WTC11 (cell line): ENCODE measurements at regions of chr6 and their contacts with region 1.

Region 1: DNA sequence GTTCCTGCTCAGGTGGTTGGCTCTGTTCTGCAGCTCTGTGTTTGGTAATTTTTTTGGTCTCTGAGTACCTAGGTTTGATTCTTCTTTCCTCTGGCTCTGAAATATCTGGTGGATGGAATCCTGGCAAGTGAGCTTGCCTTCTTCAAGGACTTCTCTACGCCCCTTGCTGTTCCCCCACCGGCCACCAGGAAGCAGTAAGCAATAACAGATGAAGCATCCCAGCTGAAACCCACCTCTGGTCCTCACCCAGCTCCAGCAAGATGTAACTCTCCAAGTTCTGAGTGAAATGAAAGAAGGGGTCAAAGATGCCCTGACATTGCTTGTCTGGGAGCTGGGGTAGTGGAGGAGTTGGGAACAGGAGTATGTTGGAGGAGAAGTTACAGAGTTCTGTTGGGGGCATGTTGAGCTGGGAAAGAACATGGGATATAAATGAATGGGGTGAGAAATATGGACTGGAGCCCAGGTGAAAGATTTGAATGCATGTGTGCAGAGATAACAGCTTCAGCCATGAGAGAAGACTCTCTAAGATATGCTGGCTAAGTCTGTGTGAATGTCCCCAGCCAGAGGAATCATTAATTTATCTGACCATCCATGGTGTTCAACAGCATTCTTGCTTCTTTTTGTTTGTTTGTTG is 51.3 kb upstream of the GLP1R start:
- DNase-seq: peak; percentile 80
- ATAC-seq: peak; percentile 92
- H3K4me3 Mint-ChIP-seq: no peak overlapping the region
- H3K27ac Mint-ChIP-seq: no peak overlapping the region
- H3K4me1 Mint-ChIP-seq: no peaks in the 10 kb centered on the region
- H3K27me3 Mint-ChIP-seq: peaks cover 8% of the 10 kb centered on the region
- CTCF ChIP-seq: peak; percentile 82

Region 2: GRCh38 chr6:38806271-38806670 is 191.0 kb before region 1 on chr6:
- CTCF ChIA-PET with region 1: no interaction called
- POLR2A ChIA-PET with region 1: no interaction called
- DNase-seq: no peak
- ATAC-seq: peak; percentile 70
- H3K4me3 Mint-ChIP-seq: no peak overlapping the region
- H3K27ac Mint-ChIP-seq: no peak overlapping the region
- H3K4me1 Mint-ChIP-seq: no peaks in the 10 kb centered on the region; the same call in 1 of the 2 replicates
- H3K27me3 Mint-ChIP-seq: no peaks in the 10 kb centered on the region; the same call in 1 of the 2 replicates
- CTCF ChIP-seq: no peak

Region 3: GRCh38 chr6:38871741-38872568 is 125.3 kb before region 1 on chr6:
- CTCF ChIA-PET with region 1: interaction called, 24 read pairs
- POLR2A ChIA-PET with region 1: no interaction called
- DNase-seq: peak; percentile 79
- ATAC-seq: peak; percentile 91
- H3K4me3 Mint-ChIP-seq: no peak overlapping the region
- H3K27ac Mint-ChIP-seq: no peak overlapping the region
- H3K4me1 Mint-ChIP-seq: peaks cover 18% of the 10 kb centered on the region
- H3K27me3 Mint-ChIP-seq: no peaks in the 10 kb centered on the region
- CTCF ChIP-seq: peak; percentile 83

Region 4: GRCh38 chr6:38955861-38956260 is 41.4 kb before region 1 on chr6:
- CTCF ChIA-PET with region 1: no interaction called
- POLR2A ChIA-PET with region 1: no interaction called
- DNase-seq: no peak
- ATAC-seq: no peak
- H3K4me3 Mint-ChIP-seq: no peak overlapping the region
- H3K27ac Mint-ChIP-seq: no peak overlapping the region
- H3K4me1 Mint-ChIP-seq: peaks cover 2% of the 10 kb centered on the region; the same call in 1 of the 2 replicates
- H3K27me3 Mint-ChIP-seq: peaks cover 6% of the 10 kb centered on the region
- CTCF ChIP-seq: no peak

Region 5: DNA sequence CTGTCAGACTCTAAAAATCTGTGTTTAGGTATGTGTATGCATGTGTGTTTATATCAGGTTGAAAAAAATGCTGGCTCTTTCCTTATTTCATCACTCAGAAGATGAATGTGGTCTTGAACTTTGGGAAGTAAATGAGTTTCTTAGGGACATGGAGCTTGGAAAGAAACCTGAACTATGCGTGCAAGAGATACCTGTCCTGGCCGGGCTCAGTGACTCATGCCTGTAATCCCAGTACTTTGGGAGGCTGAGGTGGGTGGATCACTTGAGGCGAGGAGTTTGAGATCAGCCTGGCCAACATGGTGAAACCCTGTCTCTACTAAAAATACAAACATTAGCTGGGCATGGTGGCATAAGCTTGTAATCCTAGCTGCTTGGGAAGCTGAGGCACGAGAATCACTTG is 46.9 kb after region 1 on chr6:
- CTCF ChIA-PET with region 1: interaction called, 10 read pairs
- POLR2A ChIA-PET with region 1: no interaction called
- DNase-seq: no peak
- ATAC-seq: no peak
- H3K4me3 Mint-ChIP-seq: no peak overlapping the region
- H3K27ac Mint-ChIP-seq: no peak overlapping the region
- H3K4me1 Mint-ChIP-seq: 0 out of 2 replicates have a peak, but pooled peaks cover 3% of the 10 kb centered on the region
- H3K27me3 Mint-ChIP-seq: peaks cover 38% of the 10 kb centered on the region
- CTCF ChIP-seq: no peak

Region 6: GRCh38 chr6:39083231-39083634 is 86.0 kb after region 1 on chr6:
- CTCF ChIA-PET with region 1: interaction called, 52 read pairs
- POLR2A ChIA-PET with region 1: interaction called, 6 read pairs
- DNase-seq: no peak
- ATAC-seq: no peak
- H3K4me3 Mint-ChIP-seq: no peak overlapping the region
- H3K27ac Mint-ChIP-seq: no peak overlapping the region; the same call in 1 of the 2 replicates
- H3K4me1 Mint-ChIP-seq: peaks cover 19% of the 10 kb centered on the region
- H3K27me3 Mint-ChIP-seq: no peaks in the 10 kb centered on the region; the same call in 1 of the 2 replicates
- CTCF ChIP-seq: no peak

Region 7: GRCh38 chr6:39088331-39088730 is 91.1 kb after region 1 on chr6:
- CTCF ChIA-PET with region 1: interaction called, 52 read pairs
- POLR2A ChIA-PET with region 1: interaction called, 6 read pairs
- DNase-seq: peak; percentile 75
- ATAC-seq: peak; percentile 91
- H3K4me3 Mint-ChIP-seq: no peak overlapping the region
- H3K27ac Mint-ChIP-seq: no peak overlapping the region
- H3K4me1 Mint-ChIP-seq: peaks cover 49% of the 10 kb centered on the region
- H3K27me3 Mint-ChIP-seq: no peaks in the 10 kb centered on the region; the same call in 1 of the 2 replicates
- CTCF ChIP-seq: no peak

Region 8: DNA sequence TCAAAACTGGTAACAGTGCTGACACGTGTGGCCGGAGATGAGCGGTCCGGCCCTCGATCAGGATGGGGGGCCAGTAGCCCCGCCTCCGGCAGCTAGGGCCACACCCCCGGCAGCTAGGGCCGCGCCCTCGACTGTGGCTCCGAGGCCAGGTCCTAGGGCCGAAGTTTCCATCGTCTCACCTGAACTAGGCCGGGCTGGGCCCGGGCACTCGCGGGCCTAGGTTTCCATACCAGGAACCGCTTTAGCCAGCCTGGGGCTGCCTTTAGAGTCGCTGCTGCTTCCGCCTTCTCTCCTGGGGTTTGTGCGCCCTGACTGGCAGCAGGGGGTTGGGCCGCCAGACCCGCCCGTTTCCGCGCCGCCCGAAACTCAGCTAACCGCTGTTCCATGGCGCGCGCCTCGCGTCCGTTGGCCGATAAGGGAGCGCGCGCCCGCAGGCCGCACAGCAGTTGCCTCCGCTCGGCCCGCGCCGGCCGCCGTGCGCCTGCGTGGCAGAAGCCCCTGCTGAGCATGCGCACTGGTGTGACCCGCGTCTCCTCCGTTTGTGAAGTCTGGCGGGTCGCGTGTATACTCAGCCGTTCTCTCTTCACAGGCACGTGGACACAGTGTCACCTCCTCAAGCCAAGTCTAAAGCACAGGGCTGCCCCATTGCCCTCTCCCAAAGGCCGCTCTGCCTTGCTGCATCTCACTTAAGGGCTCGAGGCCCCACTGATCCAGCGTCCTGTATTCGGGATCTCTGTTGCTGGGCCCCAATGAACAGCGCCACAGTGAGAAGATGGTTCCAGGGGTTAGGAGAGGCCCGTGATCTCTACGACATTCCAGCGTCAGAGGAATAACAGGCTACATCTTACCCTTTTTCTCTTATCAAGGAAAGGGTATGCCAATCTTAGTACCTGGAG is 117.7 kb after region 1 on chr6 and contains the start of gene SAYSD1:
- CTCF ChIA-PET with region 1: interaction called, 11 read pairs
- POLR2A ChIA-PET with region 1: no interaction called
- DNase-seq: peak; percentile 92
- ATAC-seq: peak; percentile 95
- H3K4me3 Mint-ChIP-seq: peak within 1 kb of the TSS; percentile 86
- H3K27ac Mint-ChIP-seq: peak within 1 kb of the TSS; percentile 97
- H3K4me1 Mint-ChIP-seq: peaks cover 15% of the 10 kb centered on the region
- H3K27me3 Mint-ChIP-seq: peaks cover 7% of the 10 kb centered on the region
- CTCF ChIP-seq: no peak
- total RNA-seq, gene SAYSD1: 6.9 to 7.7 TPM (median 7.4 TPM) in 3 replicates

Region 9: DNA sequence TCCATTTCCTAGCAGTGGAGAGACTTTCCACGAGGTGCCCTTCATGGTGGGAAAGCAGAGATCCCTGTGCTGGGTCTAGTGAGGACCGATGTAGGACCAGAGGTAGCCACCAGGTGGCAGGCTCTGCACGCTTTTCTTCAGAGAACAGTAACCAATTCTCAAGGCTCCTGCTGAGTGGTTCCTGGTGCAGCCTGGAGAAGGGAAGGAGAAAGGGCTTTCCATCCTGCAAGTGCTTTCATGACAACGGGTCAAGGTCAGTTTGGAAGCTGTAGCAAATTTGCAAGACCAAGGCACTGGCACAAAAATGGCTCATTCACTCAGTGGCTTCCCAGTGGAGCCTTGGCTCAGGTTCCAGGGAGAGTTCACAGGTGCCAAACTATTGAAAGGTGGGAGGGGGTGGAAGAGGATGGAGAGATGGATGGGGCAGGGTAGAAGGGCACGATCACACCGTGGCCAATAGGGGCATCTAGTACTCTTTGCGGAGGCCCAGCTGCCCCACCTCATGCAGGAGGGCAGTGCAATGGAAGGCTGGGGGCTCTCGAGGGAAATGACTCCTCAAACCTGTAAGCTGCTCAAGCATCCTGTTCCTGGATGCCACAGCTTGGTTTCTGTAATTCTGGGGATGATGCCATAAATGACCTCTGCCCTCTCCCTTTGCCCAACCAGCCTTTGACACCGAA is 350.8 kb after region 1 on chr6:
- CTCF ChIA-PET with region 1: no interaction called
- POLR2A ChIA-PET with region 1: no interaction called
- DNase-seq: peak; percentile 87
- ATAC-seq: peak; percentile 77
- H3K4me3 Mint-ChIP-seq: no peak overlapping the region
- H3K27ac Mint-ChIP-seq: no peak overlapping the region
- H3K4me1 Mint-ChIP-seq: peaks cover 25% of the 10 kb centered on the region
- H3K27me3 Mint-ChIP-seq: no peaks in the 10 kb centered on the region
- CTCF ChIP-seq: peak; percentile 91